ENCODE measurements at regions of chr7 and their contacts with region 1.

Region 1: GRCh38 chr7:79664884-79665676 is 211.6 kb upstream of the MAGI2 start:
- DNase-seq: no peak
- H3K4me3 ChIP-seq: no peak overlapping the region
- H3K27me3 ChIP-seq: no peaks in the 10 kb centered on the region
- CTCF ChIP-seq: no peak

Region 2: DNA sequence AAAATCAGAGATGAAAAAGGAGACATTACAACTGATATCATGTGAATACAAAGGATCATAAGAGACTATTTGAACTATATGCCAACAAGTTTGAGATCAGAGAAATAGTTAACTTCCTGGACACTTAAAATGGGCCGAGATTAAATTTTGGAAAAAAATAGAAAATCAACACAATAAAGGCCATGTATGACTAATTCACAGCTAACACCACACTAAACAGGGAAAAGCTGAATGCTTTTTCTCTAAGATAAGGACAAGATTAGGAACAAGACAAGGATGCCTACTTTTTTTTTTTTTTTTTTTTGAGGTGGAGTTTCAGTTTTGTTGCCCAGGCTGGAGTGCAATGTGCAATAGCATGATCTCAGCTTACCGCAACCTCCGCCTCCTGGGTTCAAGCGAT is 60.2 kb before region 1 on chr7:
- CTCF ChIA-PET with region 1: no interaction called
- POLR2A ChIA-PET with region 1: interaction called, 13 read pairs
- DNase-seq: no peak
- H3K4me3 ChIP-seq: no peak overlapping the region
- H3K27me3 ChIP-seq: no peaks in the 10 kb centered on the region
- CTCF ChIP-seq: no peak

Region 3: GRCh38 chr7:79622781-79623180 is 42.3 kb before region 1 on chr7:
- CTCF ChIA-PET with region 1: no interaction called
- POLR2A ChIA-PET with region 1: no interaction called
- DNase-seq: no peak
- H3K4me3 ChIP-seq: no peak overlapping the region
- H3K27me3 ChIP-seq: no peaks in the 10 kb centered on the region
- CTCF ChIP-seq: no peak

Measured in BJ (cell line).